ENCODE measurements at regions of chr22 and their contacts with region 1.

Region 1: GRCh38 chr22:43884600-43885325 is 7.0 kb downstream of the PNPLA5 start:
- DNase-seq: no peak
- H3K4me3 ChIP-seq: no peak overlapping the region
- CTCF ChIP-seq: peak; percentile 90

Region 2: DNA sequence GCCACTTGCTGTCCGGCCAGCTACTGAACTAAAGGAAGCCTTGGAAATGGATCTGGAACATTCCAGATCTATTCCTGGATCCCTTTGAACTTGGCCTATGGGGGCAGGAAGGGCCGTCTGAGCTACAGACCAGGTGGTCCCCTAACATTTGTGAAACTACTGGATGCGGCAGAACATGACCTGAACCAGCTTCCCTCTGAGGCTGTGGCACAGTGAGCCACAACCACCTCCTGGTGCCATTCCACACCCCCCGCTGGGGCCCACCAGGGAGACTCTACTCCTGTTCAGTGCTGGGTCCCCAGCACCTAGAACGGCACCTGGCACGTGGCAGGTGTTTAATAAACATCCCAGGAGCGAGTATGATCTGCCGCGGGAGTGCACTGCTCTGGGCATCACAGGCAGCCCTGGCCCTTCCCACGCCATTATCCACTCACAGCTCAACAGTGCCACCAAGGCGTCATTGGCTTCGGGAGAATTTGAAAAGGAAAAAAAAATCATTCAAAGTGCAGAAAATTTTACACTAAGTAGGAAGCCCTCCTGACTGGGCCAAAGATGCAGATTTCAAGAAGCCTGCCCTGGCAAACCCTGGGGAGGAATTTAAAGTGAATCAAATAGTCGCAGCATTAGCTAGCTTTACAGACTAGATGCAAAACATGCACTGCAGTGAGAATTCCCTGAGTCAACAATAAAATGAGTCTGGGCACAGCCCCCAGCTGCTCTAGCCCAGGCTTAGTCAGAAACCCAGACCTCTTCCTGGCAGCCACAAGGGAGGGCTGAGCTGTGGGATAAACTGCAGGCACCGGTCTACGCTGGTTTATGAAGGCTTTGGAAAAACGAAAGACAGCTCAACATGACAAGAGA is 58.4 kb before region 1 on chr22:
- CTCF ChIA-PET with region 1: interaction called, 10 read pairs
- POLR2A ChIA-PET with region 1: no interaction called
- DNase-seq: peak; percentile 33
- H3K4me3 ChIP-seq: peak overlapping the region; percentile 35
- CTCF ChIP-seq: peak; percentile 26

Region 3: GRCh38 chr22:43867839-43868652 is 16.7 kb before region 1 on chr22:
- CTCF ChIA-PET with region 1: interaction called, 15 read pairs
- POLR2A ChIA-PET with region 1: no interaction called
- DNase-seq: no peak
- H3K4me3 ChIP-seq: no peak overlapping the region
- CTCF ChIP-seq: no peak

Region 4: DNA sequence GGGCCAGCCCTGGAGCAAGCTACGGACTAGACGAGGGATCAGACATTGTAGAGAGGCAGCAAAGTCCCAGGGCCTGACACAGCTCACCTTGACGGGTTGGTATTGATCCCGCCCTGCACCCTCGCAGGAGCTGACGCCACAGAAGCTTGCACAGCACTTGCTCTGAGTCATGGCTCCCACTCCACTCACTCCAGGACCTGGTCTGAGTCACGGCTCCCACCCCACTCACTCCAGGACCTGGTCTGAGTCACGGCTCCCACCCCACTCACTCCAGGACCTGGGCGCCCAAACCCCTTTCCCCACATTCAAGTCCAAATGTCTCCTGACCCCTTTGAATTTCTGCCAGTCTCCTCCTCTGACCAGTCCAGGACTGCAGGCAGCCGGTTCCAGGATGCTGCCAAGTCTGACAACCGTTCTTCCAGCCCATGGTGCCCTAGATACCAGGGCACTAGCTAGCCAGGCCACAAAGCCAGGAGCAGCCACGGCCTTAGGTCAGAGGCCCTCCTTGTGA is 13.0 kb after region 1 on chr22:
- CTCF ChIA-PET with region 1: interaction called, 48 read pairs
- POLR2A ChIA-PET with region 1: no interaction called
- DNase-seq: no peak
- H3K4me3 ChIP-seq: no peak overlapping the region
- CTCF ChIP-seq: no peak

Region 5: DNA sequence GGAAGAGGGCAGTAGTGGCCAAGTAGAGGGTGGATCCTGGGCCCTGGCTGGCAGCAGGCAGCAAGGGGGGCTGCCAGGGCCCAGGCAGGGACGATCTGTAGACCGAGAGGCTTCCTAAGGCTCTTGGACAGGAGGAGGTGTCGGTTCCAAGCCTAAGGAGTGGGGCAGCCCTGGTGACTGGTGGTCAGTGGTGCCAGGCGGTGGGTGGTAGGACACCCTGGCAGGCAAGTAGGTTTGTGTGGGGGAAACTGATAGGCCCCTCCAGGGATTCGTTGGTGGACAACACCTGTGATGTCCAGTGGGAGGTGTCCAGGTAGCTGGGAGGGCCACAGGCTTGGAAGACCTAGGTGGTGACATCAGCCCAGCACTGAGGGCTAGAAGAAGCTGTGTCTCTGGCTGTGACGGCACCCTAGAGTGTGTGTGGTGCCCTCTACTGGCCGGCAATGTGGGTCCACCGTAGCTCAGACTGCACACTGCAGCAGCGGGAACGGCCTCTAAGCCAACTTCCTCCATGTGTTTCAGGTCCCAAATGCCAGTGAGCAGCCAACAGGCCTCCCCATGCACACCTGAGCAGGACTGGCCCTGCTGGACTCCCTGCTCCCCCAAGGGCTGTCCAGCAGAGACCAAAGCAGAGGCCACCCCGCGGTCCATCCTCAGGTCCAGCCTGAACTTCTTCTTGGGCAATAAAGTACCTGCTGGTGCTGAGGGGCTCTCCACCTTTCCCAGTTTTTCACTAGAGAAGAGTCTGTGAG is 61.0 kb after region 1 on chr22:
- CTCF ChIA-PET with region 1: interaction called, 58 read pairs
- POLR2A ChIA-PET with region 1: no interaction called
- DNase-seq: no peak
- H3K4me3 ChIP-seq: no peak overlapping the region
- CTCF ChIP-seq: peak; percentile 94

Region 6: DNA sequence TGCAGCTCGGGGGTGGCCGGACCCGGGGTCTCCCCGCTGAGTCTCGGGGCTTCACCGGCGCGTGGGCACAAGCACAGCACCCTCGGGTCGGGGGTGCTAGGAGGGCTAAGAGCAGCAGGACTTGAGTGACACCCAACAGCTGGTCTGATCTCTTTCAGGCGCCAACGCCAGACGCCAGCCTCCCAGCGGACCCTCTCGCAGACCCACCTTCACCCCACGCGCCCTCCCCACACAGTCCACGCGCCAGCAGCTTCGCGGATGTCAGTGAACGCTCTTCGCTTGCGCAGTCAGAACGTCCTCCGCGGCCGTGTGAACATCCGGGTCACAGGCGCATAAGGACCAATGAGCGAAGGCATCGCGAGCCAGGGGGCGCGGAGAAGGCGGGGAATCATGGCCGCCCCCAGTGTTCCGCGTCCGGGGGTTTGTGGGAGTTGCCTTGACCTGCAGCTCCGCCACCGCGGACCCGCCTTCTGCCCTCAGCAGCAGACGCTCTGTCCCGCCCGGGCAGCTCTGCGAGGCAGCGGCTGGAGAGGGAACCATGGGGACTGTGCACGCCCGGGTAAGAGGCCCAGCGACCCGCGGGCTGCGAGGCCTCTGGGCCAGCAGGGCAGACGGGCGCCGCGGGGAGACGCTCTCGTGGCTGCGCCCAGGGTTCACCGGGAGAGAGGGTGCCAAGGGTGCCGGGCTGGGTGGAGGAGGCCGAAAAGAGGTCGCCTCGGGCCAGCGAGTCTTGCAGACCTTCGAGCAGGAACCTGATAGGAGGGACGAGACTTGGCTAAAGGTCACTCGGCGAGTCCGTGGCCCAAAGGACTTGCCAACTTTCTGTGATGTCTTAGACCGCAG is 70.5 kb after region 1 on chr22 and contains the start of gene SAMM50:
- CTCF ChIA-PET with region 1: interaction called, 11 read pairs
- POLR2A ChIA-PET with region 1: no interaction called
- DNase-seq: peak; percentile 37
- H3K4me3 ChIP-seq: peak within 1 kb of the TSS; percentile 98
- CTCF ChIP-seq: no peak

Region 7: GRCh38 chr22:43969989-43970755 is 85.4 kb after region 1 on chr22:
- CTCF ChIA-PET with region 1: no interaction called
- POLR2A ChIA-PET with region 1: no interaction called
- DNase-seq: no peak
- H3K4me3 ChIP-seq: no peak overlapping the region
- CTCF ChIP-seq: no peak

Region 8: DNA sequence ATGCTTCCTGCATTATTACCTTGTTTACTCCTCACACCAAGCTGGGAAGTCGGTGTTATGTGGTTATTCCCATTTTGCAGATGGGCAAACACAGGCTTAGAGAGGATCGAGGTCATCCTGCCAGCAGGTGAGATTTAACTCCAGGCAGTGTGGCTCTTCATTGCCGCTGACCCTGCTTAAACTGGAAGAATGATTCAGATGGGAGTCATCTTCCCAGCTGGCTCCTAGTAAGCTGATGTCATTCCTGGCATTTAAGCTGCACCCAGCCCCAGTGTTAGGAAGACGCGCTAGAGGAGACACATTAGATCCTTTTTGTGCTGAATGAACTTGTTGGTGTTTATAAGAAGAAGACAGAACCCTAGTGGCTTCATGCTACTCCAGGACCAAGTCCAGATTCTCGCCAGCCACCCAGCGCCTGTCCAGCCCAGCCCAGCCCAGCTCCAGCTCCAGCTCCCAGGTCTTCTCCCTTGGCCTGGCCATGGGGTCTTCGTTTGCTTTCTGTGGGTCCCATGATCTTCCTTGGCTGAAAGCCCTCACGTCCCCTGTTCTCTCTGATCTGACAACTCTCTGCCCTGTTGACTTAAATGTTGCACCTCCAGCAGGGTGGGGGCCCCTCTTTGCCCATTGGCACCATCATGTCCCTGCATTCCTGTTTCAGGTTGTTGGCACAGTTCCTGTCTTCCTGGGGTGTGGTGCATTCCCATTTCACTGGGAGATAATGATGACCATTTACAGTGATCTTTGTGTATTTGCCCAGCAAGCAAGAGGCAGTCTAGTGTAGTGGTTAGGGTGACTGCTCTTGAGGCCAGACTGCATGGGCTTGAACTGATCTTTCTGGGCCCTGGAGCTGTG is 153.0 kb after region 1 on chr22:
- CTCF ChIA-PET with region 1: no interaction called
- POLR2A ChIA-PET with region 1: no interaction called
- DNase-seq: peak; percentile 75
- H3K4me3 ChIP-seq: no peak overlapping the region
- CTCF ChIP-seq: no peak

Measured in AG04449 (cell line).